IMR-90 (cell line): ENCODE measurements at regions of chr20 and their contacts with region 1.

Region 1: GRCh38 chr20:1266167-1266973 is at the start of gene SNPH:
- DNase-seq: peak; percentile 76
- ATAC-seq: peak; percentile 96
- H3K4me3 ChIP-seq: peak within 1 kb of the TSS; percentile 81
- H3K27ac ChIP-seq: peak within 1 kb of the TSS; percentile 66
- H3K4me1 ChIP-seq: peaks cover 6% of the 10 kb centered on the region; the same call in 1 of the 2 replicates
- H3K27me3 ChIP-seq: no peaks in the 10 kb centered on the region
- CTCF ChIP-seq: no peak
- POLR2A ChIP-seq: no peak
- RAD21 ChIP-seq: no peak
- total RNA-seq, gene SNPH: 4.5 and 4.7 TPM in 2 replicates

Region 2: DNA sequence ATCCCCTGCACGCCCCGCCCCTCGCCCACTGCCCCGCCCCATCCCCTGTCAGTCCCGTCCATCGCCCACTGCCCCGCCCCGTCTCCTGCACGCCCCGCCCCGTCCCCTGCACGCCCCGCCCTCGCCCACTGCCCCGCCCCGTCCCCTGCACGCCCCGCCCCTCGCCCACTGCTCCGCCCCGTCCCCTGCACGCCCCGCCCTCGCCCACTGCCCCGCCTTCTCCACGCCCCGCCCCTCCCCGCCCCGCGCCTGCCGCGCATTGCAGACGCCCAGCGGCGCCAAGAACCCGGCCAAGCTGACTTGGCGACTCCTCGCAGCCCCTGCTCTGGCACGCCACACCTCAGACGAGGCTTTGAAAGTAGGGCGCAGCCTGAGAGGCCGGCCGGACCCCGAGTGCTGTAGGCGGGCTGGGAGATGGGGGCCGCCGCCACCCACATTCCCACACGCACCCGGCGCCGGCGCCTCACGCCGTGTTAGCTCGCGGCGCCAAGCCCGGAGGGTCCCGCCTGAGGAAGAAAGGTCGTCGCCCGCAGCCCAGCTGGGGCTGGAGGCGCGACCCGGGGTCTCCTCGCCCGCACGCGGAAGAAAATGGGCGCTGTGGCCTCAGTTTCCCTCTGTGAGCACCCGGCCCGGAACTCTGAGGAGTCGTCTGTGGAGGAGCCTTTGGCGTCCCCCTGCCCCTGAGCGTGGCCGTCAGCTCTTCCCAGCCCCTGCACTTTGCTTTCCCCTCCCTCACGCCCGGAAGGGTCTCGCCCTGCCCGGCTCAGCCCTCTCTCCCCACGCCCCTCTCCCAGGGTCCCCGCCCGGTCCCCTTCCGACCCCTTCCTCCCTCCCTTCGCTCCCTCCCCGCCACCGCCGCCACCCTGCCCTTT is 40.4 kb before region 1 on chr20 and contains the start of gene RAD21L1:
- CTCF ChIA-PET with region 1: no interaction called
- POLR2A ChIA-PET with region 1: interaction called, 5 read pairs
- dilution Hi-C with region 1: no loop called
- in situ Hi-C with region 1: no loop called
- intact Hi-C with region 1: loop called (anchors 2 kb)
- DNase-seq: peak; percentile 60
- ATAC-seq: peak; percentile 92
- H3K4me3 ChIP-seq: peak within 1 kb of the TSS; percentile 86
- H3K27ac ChIP-seq: peak within 1 kb of the TSS; percentile 4; the same call in 1 of the 2 replicates
- H3K4me1 ChIP-seq: no peaks in the 10 kb centered on the region
- H3K27me3 ChIP-seq: peaks cover 8% of the 10 kb centered on the region
- CTCF ChIP-seq: no peak
- POLR2A ChIP-seq: no peak
- RAD21 ChIP-seq: 0 out of 2 replicates have a peak, but pooled peaks have one; percentile 13
- total RNA-seq, gene RAD21L1: under 0.01 TPM in 1 of 2 replicates, not detected in the other

Region 3: DNA sequence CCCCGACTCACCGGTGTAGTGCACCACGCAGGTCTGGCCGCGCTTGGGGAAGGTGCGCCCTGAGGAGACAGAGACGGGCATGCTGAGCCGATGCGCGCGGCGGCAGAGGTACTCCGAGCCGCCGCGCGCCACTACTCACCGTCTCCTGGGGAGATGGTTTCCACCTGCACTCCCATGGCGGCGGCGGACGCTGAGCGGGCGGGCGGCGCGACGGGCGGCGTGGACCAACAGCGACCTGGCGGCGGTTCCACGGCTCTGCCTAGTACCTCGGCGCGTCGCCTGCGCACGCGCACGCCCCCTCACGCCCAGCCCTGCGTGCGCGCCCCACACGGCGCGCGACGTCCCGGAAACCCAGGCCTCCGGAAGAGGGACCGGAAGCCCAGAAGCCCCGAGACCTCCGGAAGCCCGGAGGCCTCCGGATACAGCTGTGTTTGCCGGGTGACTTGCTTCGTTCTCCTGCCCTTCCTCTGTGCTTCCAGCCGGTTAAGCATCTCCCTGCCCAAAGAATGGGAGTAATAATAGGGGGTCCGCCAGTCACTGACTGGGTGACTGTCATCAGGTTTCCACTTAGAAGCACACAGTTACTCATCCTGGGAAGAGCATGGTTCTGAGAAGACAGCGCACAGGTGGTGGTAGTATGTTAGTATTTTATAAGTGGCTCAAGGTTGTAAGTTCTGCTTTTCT is 126.6 kb after region 1 on chr20 and contains the start of gene FKBP1A:
- CTCF ChIA-PET with region 1: no interaction called
- POLR2A ChIA-PET with region 1: no interaction called
- dilution Hi-C with region 1: no loop called
- in situ Hi-C with region 1: no loop called
- intact Hi-C with region 1: no loop called
- DNase-seq: peak; percentile 90
- ATAC-seq: peak; percentile 94
- H3K4me3 ChIP-seq: peak within 1 kb of the TSS; percentile 65
- H3K27ac ChIP-seq: peak within 1 kb of the TSS; percentile 85
- H3K4me1 ChIP-seq: peaks cover 26% of the 10 kb centered on the region
- H3K27me3 ChIP-seq: no peaks in the 10 kb centered on the region
- CTCF ChIP-seq: 0 out of 2 replicates have a peak, but pooled peaks have one; percentile 8
- POLR2A ChIP-seq: peak; percentile 80
- RAD21 ChIP-seq: 0 out of 2 replicates have a peak, but pooled peaks have one; percentile 6
- total RNA-seq, gene FKBP1A: 91.9 and 120 TPM in 2 replicates